Natural killer cell (primary cell): ENCODE measurements at regions of chr15 and their contacts with region 1.

Region 1: DNA sequence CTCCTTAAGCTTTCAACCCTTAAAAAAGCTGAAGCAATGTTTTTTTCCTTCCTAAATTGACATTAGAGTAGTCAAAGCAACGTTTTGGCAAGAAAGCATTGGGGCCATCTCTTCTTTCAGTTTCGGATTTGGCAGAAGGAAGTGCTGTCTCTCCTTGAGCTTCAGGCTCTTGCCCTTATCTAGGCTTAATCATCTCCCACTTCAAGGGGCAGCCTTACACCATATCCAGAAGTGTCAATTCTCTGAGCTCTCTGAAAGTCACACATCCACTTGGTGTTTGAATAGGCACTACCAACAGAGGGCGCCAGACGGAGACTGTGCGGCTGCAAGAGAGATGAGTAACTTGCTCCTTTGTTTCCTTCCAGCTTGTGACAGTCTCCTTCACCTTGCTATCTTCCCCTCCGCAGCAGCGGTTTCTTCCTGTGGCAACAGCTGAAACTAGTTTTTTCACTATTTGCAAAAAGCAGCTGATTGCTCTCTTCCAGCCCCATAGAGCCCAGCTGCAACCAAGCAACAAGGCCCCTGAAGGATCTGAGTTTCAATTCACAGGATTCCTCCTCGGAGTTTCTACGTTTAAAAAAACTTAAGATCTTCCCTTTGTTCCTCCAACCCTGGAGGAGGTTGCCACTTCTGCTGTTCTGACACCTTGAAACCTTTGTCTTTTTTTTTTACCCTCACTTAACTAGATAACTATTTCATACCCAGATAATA is 147.0 kb upstream of the SLCO3A1 start:
- DNase-seq: peak; percentile 70 to 91
- ATAC-seq: peak; percentile 96 to 99 (median 98)
- H3K4me3 ChIP-seq: no peak overlapping the region
- H3K4me3 Mint-ChIP-seq: peak overlapping the region; percentile 65
- H3K27ac ChIP-seq: peak overlapping the region; percentile 52
- H3K27ac Mint-ChIP-seq: peak overlapping the region; percentile 82 to 83
- H3K4me1 ChIP-seq: peaks cover 19% of the 10 kb centered on the region
- H3K4me1 Mint-ChIP-seq: peaks cover 22 to 31% of the 10 kb centered on the region in 2 donors
- H3K27me3 ChIP-seq: no peaks in the 10 kb centered on the region
- H3K27me3 Mint-ChIP-seq: peaks cover 0 to 9% of the 10 kb centered on the region in 2 donors
- CTCF ChIP-seq: peak; percentile 85

Region 2: GRCh38 chr15:90620379-90621067 is 1086.0 kb before region 1 on chr15:
- intact Hi-C with region 1: no loop called
- DNase-seq: peak in 1 of 2 donors; percentile 41
- ATAC-seq: no peak
- H3K4me3 ChIP-seq: no peak overlapping the region
- H3K4me3 Mint-ChIP-seq: no peak overlapping the region
- H3K27ac ChIP-seq: no peak overlapping the region
- H3K27ac Mint-ChIP-seq: peak overlapping the region in 1 of 2 donors; percentile 52
- H3K4me1 ChIP-seq: peaks cover 7% of the 10 kb centered on the region
- H3K4me1 Mint-ChIP-seq: peaks cover 0 to 6% of the 10 kb centered on the region in 2 donors
- H3K27me3 ChIP-seq: no peaks in the 10 kb centered on the region
- H3K27me3 Mint-ChIP-seq: no peaks in the 10 kb centered on the region
- CTCF ChIP-seq: no peak

Region 3: DNA sequence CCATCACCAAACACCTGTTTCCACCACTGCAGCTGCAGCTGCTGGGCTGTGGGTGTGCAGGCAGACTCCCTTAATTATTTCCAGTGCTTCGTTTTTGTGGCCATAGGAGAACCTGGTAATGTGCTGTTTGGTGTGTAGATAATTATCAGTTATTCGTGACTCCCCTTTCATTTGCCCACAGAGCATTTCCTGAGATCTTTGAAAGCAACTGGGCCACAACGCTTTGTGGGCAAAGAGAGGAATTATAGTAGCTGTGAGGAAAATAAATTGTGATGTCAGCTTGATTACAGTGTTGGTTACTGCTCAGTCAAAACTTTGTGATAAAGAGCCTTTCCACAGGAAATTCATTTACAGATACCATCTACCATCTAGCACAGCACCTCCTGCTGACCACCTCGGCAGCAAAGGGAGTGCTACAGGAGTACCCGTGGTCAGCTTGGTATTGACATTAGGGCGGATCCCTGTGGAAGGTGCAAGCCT is 46.3 kb before region 1 on chr15:
- intact Hi-C with region 1: loop called (anchors 2 kb)
- DNase-seq: peak in 1 of 2 donors; percentile 18
- ATAC-seq: peak; percentile 24 to 56 (median 47)
- H3K4me3 ChIP-seq: no peak overlapping the region
- H3K4me3 Mint-ChIP-seq: no peak overlapping the region
- H3K27ac ChIP-seq: no peak overlapping the region
- H3K27ac Mint-ChIP-seq: no peak overlapping the region
- H3K4me1 ChIP-seq: peaks cover 18% of the 10 kb centered on the region
- H3K4me1 Mint-ChIP-seq: peaks cover 15 to 23% of the 10 kb centered on the region in 2 donors
- H3K27me3 ChIP-seq: peaks cover 10% of the 10 kb centered on the region
- H3K27me3 Mint-ChIP-seq: peaks cover 16 to 44% of the 10 kb centered on the region in 2 donors
- CTCF ChIP-seq: no peak

Region 4: DNA sequence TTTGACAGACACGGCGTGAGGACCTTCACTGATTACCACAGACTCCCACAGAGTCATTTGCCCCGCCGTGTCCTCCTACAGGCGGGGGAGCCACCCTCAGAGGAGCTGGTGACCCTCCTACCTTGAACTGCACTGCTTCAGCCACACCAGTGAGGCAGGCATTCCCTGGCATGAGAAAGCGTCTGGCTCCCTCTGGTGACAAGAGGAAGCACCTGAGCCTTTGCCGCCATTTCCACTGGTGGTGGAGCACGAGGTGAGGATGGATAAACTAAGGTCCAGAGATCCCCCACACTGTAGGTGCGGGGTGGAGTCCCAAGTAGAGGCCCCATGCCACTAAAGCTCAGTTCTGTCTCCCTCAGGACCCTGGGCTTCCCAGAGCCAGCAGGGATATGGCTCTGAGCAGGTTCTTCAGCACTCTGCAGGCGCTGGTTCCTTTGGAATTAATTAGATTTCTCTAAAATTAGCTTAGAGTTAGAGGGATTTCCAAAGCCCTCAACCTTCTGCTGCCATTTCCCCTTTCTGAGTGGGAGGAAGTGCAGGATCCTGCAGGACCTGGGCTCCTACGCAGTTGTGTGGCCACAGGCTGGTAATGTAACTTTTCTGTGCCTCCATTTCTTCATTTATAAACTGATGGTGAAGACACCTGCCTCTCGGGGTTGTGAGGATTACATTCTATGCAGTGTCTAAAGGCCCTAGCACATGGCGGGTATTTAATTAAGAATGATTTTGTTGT is 371.0 kb after region 1 on chr15:
- intact Hi-C with region 1: loop called (anchors 5 kb)
- DNase-seq: peak; percentile 32 to 73
- ATAC-seq: peak; percentile 43 to 76 (median 70)
- H3K4me3 ChIP-seq: no peak overlapping the region
- H3K4me3 Mint-ChIP-seq: no peak overlapping the region
- H3K27ac ChIP-seq: no peak overlapping the region
- H3K27ac Mint-ChIP-seq: no peak overlapping the region
- H3K4me1 ChIP-seq: peaks cover 32% of the 10 kb centered on the region
- H3K4me1 Mint-ChIP-seq: peaks cover 39 to 60% of the 10 kb centered on the region in 2 donors
- H3K27me3 ChIP-seq: no peaks in the 10 kb centered on the region
- H3K27me3 Mint-ChIP-seq: no peaks in the 10 kb centered on the region
- CTCF ChIP-seq: peak; percentile 48